Right ventricle myocardium inferior (tissue), 1 donor: ENCODE measurements at regions of chr12 and their contacts with region 1.

Region 1: DNA sequence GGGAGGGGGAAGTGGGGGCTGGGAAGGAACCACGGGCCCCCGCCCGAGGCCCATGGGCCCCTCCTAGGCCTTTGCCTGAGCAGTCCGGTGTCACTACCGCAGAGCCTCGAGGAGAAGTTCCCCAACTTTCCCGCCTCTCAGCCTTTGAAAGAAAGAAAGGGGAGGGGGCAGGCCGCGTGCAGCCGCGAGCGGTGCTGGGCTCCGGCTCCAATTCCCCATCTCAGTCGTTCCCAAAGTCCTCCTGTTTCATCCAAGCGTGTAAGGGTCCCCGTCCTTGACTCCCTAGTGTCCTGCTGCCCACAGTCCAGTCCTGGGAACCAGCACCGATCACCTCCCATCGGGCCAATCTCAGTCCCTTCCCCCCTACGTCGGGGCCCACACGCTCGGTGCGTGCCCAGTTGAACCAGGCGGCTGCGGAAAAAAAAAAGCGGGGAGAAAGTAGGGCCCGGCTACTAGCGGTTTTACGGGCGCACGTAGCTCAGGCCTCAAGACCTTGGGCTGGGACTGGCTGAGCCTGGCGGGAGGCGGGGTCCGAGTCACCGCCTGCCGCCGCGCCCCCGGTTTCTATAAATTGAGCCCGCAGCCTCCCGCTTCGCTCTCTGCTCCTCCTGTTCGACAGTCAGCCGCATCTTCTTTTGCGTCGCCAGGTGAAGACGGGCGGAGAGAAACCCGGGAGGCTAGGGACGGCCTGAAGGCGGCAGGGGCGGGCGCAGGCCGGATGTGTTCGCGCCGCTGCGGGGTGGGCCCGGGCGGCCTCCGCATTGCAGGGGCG is at the start of gene GAPDH:
- DNase-seq: peak; percentile 95
- ATAC-seq: peak; percentile 86
- total RNA-seq, gene GAPDH: 4,337 TPM

Region 2: DNA sequence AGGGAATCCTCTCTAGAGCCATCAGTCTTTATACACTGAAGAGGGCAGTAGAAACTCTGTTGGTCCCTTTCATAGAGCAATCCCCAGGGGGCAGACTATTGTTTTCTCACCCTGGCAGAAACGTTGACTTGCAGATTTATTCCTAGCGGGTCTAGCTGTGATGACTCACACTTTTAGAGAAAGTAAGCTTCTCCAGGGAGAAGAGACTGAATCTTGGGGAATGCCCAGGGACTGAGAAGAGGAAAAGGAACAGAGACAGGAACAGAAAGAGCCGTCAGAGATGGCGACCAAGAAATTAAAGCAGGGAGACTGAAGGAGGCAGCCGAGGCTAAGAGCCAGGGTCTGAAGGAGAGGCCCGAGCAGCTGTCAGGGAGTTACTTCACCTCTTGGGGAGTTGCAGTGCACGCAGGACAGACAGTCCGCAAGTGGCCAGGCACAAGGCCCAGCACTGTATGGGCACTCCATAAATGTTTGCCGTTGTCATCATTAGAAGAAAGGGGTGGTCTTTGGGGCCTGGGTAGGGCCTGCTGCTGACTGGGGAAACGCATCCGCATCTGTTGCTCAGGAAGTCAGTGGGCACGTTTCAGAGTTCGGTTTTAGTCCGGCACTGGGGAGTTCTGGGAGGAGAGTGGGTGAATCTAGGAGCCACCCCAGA is 210.6 kb before region 1 on chr12:
- intact Hi-C with region 1: loop called (anchors 5 kb)
- DNase-seq: peak; percentile 70
- ATAC-seq: peak; percentile 51

Region 3: GRCh38 chr12:6423267-6424007 is 110.7 kb before region 1 on chr12:
- intact Hi-C with region 1: loop called (anchors 5 kb)
- DNase-seq: peak; percentile 92
- ATAC-seq: peak; percentile 98

Region 4: DNA sequence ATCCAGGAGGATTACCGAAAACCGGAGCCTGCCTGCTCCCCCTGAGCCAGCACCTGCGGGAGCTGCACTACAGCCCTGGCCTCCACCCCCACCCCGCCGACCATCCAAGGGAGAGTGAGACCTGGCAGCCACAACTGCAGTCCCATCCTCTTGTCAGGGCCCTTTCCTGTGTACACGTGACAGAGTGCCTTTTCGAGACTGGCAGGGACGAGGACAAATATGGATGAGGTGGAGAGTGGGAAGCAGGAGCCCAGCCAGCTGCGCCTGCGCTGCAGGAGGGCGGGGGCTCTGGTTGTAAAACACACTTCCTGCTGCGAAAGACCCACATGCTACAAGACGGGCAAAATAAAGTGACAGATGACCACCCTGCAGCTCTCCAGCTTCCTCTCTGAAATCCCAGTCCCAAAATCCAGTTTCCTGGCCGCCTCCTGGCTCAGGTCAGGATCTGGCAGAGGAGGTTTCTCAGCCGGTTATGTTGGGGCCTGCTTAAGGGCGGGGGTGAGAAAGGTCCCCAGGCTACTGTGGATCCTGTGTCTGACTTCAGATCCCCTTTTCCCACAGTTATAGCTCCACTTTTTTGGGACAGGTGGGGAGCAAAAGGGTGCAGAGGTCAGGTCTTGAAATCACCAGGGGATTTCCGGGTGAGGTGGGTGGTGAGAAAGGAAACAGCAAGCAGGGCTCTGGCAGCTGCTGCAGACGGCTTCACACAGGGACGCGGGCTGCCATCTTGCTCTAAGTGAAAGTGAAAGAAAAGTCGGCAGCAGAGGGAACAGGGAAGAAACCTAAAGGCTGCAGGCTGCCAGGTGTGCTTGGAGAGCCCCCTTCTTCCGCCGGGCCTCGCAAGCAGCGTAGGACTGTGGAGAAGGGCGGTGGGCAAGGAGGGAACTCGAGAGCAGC is 82.5 kb before region 1 on chr12 and contains the start of gene TAPBPL:
- intact Hi-C with region 1: loop called (anchors 1 kb)
- DNase-seq: peak; percentile 91
- ATAC-seq: peak; percentile 95
- total RNA-seq, gene TAPBPL: 15.7 TPM

Region 5: GRCh38 chr12:6493497-6494257 is 40.4 kb before region 1 on chr12 and contains the start of gene NCAPD2:
- intact Hi-C with region 1: loop called (anchors 1 kb)
- DNase-seq: peak; percentile 98
- ATAC-seq: peak; percentile 97
- total RNA-seq, gene NCAPD2: 11.6 TPM

Region 6: GRCh38 chr12:6554168-6555017 is 20.3 kb after region 1 on chr12:
- intact Hi-C with region 1: loop called (anchors 1 kb)
- DNase-seq: peak; percentile 88
- ATAC-seq: peak; percentile 45